Naive thymus-derived CD4-positive, alpha-beta T cell (primary cell): ENCODE measurements at regions of chr12 and their contacts with region 1.

Region 1: DNA sequence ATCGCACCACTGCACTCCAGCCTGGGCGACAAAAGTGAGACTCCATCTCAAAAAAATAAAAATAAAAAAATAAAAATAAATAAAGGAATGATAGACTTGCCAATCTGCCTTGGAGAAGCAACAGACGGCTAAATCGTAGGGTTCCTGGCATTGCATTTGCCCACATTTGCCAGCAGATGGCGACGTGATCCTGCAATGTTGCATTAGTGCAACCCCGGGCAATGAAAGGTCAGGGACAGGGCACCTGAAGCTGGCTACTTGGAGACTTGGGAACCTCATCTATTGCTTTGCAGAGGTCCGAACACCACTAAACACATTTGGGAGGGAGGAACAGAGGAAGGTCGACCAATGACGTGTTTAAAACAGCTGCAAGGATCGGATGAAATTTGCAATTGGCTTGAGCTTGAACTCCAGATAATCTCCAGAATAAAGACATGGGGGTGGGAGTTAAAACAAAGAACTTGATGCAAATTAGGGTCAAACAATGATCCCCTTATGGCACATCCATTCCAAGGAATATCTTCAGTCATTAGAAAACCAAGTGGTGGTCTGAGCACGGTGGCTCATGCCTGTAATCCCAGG is 34.6 kb downstream of the SPRING1 start:
- DNase-seq: peak; percentile 26 to 69 (median 57)
- ATAC-seq: peak; percentile 77
- H3K4me3 ChIP-seq: no peak overlapping the region
- H3K4me3 Mint-ChIP-seq: no peak overlapping the region
- H3K27ac ChIP-seq: no peak overlapping the region
- H3K27ac Mint-ChIP-seq: peak overlapping the region in 1 of 9 donors; percentile 53
- H3K4me1 ChIP-seq: peaks cover 0 to 3% of the 10 kb centered on the region in 2 donors
- H3K4me1 Mint-ChIP-seq: peaks cover 2 to 6% (median 4%) of the 10 kb centered on the region in 7 donors
- H3K27me3 ChIP-seq: no peaks in the 10 kb centered on the region
- H3K27me3 Mint-ChIP-seq: peaks cover 3 to 11% (median 5%) of the 10 kb centered on the region in 5 donors

Region 2: DNA sequence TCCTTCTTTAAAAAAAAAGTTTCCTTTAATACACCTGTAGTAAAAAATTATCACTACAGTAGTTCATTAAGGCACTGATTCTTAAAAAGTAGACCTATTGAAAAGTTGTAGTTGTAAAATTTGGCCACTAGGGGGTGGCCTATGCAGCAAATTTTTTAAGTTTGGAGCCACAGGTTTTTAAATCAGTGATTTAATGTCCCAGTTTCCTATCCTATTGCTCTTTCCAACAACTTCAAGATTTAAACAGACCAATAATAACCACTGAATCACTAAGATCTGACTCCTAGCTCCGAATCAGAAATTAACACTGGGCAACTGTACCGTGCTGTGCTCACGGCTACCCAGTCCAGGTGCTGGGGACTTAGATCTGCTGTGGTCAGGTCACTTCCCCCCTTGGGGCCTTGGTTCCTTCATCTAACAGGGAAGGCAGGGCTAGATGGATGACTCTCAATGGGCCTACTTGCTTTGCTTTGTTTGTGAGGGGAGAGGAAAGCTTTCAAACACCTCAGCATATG is 705.1 kb before region 1 on chr12:
- CTCF ChIA-PET with region 1: interaction called, 11 read pairs
- POLR2A ChIA-PET with region 1: no interaction called
- intact Hi-C with region 1: loop called in 1 of 2 experiments (anchors 10 kb)
- DNase-seq: peak in 7 of 9 donors; percentile 13 to 49 (median 31)
- ATAC-seq: peak; percentile 72
- H3K4me3 ChIP-seq: no peak overlapping the region
- H3K4me3 Mint-ChIP-seq: no peak overlapping the region
- H3K27ac ChIP-seq: no peak overlapping the region
- H3K27ac Mint-ChIP-seq: peak overlapping the region in 5 of 9 donors; percentile 31 to 69 (median 46)
- H3K4me1 ChIP-seq: no peaks in the 10 kb centered on the region
- H3K4me1 Mint-ChIP-seq: peaks cover 0 to 26% (median 10%) of the 10 kb centered on the region in 7 donors
- H3K27me3 ChIP-seq: no peaks in the 10 kb centered on the region
- H3K27me3 Mint-ChIP-seq: no peaks in the 10 kb centered on the region

Region 3: DNA sequence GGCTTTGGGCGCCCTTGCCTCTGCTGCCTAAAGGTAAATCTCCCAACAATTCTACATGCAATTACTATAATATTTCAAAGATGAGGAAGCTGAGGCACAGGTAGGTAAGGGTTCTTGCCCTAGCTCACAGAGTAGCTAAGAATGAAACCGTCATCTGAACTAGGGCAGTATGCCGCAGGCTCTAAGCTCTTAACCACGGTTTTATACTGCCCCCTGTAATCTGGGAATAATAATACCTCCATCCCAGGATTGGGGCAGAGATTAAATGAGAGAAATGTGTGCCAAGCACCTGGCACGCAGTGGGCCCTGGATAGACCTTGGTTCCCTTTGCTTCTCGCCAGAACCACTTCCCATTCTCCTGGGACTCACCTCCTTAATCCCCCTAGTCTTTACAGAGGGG is 179.4 kb after region 1 on chr12:
- CTCF ChIA-PET with region 1: interaction called, 3 read pairs
- POLR2A ChIA-PET with region 1: no interaction called
- intact Hi-C with region 1: loop called (anchors 1 to 2 kb)
- DNase-seq: no peak
- ATAC-seq: no peak
- H3K4me3 ChIP-seq: no peak overlapping the region
- H3K4me3 Mint-ChIP-seq: peak overlapping the region in 9 of 10 donors; percentile 10 to 79 (median 71)
- H3K27ac ChIP-seq: no peak overlapping the region
- H3K27ac Mint-ChIP-seq: no peak overlapping the region
- H3K4me1 ChIP-seq: peaks cover 7 to 31% of the 10 kb centered on the region in 2 donors
- H3K4me1 Mint-ChIP-seq: peaks cover 28 to 43% (median 37%) of the 10 kb centered on the region in 7 donors
- H3K27me3 ChIP-seq: peaks cover 0 to 14% of the 10 kb centered on the region in 2 donors
- H3K27me3 Mint-ChIP-seq: peaks cover 54 to 84% (median 60%) of the 10 kb centered on the region in 5 donors

Region 4: GRCh38 chr12:116955382-116956021 is 252.2 kb after region 1 on chr12:
- CTCF ChIA-PET with region 1: interaction called, 11 read pairs
- POLR2A ChIA-PET with region 1: no interaction called
- intact Hi-C with region 1: loop called (anchors 1 kb)
- DNase-seq: peak in 7 of 9 donors; percentile 21 to 49 (median 34)
- ATAC-seq: peak; percentile 60
- H3K4me3 ChIP-seq: no peak overlapping the region
- H3K4me3 Mint-ChIP-seq: no peak overlapping the region
- H3K27ac ChIP-seq: no peak overlapping the region
- H3K27ac Mint-ChIP-seq: peak overlapping the region in 1 of 9 donors; percentile 51
- H3K4me1 ChIP-seq: peaks cover 0 to 4% of the 10 kb centered on the region in 2 donors
- H3K4me1 Mint-ChIP-seq: peaks cover 4 to 24% (median 8%) of the 10 kb centered on the region in 7 donors
- H3K27me3 ChIP-seq: no peaks in the 10 kb centered on the region
- H3K27me3 Mint-ChIP-seq: no peaks in the 10 kb centered on the region

Region 5: GRCh38 chr12:117002051-117002817 is 298.9 kb after region 1 on chr12:
- CTCF ChIA-PET with region 1: no interaction called
- POLR2A ChIA-PET with region 1: no interaction called
- intact Hi-C with region 1: no loop called
- DNase-seq: no peak
- ATAC-seq: no peak
- H3K4me3 ChIP-seq: no peak overlapping the region
- H3K4me3 Mint-ChIP-seq: no peak overlapping the region
- H3K27ac ChIP-seq: no peak overlapping the region
- H3K27ac Mint-ChIP-seq: no peak overlapping the region
- H3K4me1 ChIP-seq: no peaks in the 10 kb centered on the region
- H3K4me1 Mint-ChIP-seq: peaks cover 0 to 8% (median 0%) of the 10 kb centered on the region in 7 donors
- H3K27me3 ChIP-seq: no peaks in the 10 kb centered on the region
- H3K27me3 Mint-ChIP-seq: no peaks in the 10 kb centered on the region

Region 6: GRCh38 chr12:117025481-117026151 is 322.3 kb after region 1 on chr12:
- CTCF ChIA-PET with region 1: no interaction called
- POLR2A ChIA-PET with region 1: no interaction called
- intact Hi-C with region 1: loop called (anchors 1 to 5 kb)
- DNase-seq: peak in 7 of 9 donors; percentile 21 to 54 (median 36)
- ATAC-seq: peak; percentile 84
- H3K4me3 ChIP-seq: no peak overlapping the region
- H3K4me3 Mint-ChIP-seq: no peak overlapping the region
- H3K27ac ChIP-seq: no peak overlapping the region
- H3K27ac Mint-ChIP-seq: peak overlapping the region in 3 of 9 donors; percentile 62 to 69 (median 68)
- H3K4me1 ChIP-seq: no peaks in the 10 kb centered on the region
- H3K4me1 Mint-ChIP-seq: peaks cover 0 to 5% (median 4%) of the 10 kb centered on the region in 7 donors
- H3K27me3 ChIP-seq: no peaks in the 10 kb centered on the region
- H3K27me3 Mint-ChIP-seq: no peaks in the 10 kb centered on the region

Region 7: DNA sequence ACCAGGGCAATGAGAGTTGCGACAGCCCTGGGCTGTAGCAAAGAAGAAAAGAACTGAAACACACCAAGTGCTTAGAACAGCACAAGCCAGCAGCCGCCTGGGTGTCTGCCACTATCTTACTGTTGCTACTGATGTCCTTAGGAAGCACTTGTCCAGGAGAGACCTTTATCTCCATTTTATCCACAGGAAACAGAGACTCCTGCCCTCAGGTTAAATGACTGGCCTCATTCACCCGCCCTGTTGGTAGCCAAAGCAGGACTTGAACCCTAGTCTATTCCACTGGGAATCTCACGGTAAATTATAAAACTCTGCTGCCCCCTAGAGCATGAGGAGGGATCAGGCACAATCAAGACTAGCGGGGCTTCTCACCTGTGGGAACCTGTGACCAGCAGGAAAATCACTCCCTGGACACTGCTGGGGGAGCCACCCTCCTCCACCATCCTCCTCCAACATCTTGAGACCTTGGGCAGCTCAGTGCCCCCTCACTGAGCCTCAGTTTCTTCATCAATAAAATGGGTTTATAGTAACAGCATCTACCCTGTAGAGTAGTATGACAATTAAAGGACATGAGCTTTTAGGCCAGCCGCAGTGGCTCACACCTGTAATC is 416.4 kb after region 1 on chr12:
- CTCF ChIA-PET with region 1: interaction called, 7 read pairs
- POLR2A ChIA-PET with region 1: no interaction called
- intact Hi-C with region 1: loop called in 1 of 2 experiments (anchors 2 kb)
- DNase-seq: peak in 4 of 9 donors; percentile 17 to 43 (median 21)
- ATAC-seq: peak; percentile 51
- H3K4me3 ChIP-seq: no peak overlapping the region
- H3K4me3 Mint-ChIP-seq: no peak overlapping the region
- H3K27ac ChIP-seq: no peak overlapping the region
- H3K27ac Mint-ChIP-seq: no peak overlapping the region
- H3K4me1 ChIP-seq: no peaks in the 10 kb centered on the region
- H3K4me1 Mint-ChIP-seq: peaks cover 0 to 4% (median 0%) of the 10 kb centered on the region in 7 donors
- H3K27me3 ChIP-seq: no peaks in the 10 kb centered on the region
- H3K27me3 Mint-ChIP-seq: no peaks in the 10 kb centered on the region

Region 8: DNA sequence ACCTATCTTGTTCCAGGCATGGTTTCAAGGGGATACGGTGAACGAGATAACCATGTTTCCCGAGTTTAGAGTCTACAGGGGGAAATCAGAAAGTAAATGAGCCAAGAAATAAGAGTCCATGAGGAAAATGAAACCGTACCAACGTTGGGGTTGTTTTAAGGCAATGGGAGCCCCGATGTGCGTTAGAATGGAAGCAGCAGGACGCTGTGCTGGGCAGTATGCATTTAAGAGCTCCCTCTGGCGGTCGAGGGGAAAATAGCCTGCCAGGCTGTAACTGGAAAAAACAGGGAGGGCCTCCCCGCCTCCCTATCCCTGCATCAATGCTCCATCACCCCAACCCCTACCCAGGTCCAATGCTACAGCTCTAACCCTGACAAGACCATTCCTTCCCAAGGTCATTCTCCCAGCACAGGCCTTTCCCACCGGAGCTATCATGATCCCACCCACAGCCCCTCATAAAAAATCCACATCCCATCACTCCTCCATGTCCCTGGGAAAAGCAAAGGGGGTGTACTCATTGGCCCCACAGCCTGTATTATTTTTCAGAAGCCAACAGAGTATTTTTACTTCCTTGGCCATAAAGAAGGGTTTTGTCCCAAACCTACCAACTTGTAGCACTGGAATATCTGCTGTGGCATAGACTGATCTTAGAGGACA is 884.5 kb after region 1 on chr12:
- CTCF ChIA-PET with region 1: no interaction called
- POLR2A ChIA-PET with region 1: no interaction called
- intact Hi-C with region 1: loop called in 1 of 2 experiments (anchors 10 kb)
- DNase-seq: peak in 3 of 9 donors; percentile 3 to 53 (median 5)
- ATAC-seq: peak; percentile 46
- H3K4me3 ChIP-seq: no peak overlapping the region
- H3K4me3 Mint-ChIP-seq: no peak overlapping the region
- H3K27ac ChIP-seq: no peak overlapping the region
- H3K27ac Mint-ChIP-seq: no peak overlapping the region
- H3K4me1 ChIP-seq: no peaks in the 10 kb centered on the region
- H3K4me1 Mint-ChIP-seq: no peaks in the 10 kb centered on the region
- H3K27me3 ChIP-seq: no peaks in the 10 kb centered on the region
- H3K27me3 Mint-ChIP-seq: peaks cover 5 to 32% (median 13%) of the 10 kb centered on the region in 5 donors